MCF 10A (cell line): ENCODE measurements at regions of chr19 and their contacts with region 1.

Region 1: GRCh38 chr19:9934132-9934950 is 2.0 kb downstream of the OLFM2 start:
- DNase-seq: peak; percentile 83
- H3K4me3 Mint-ChIP-seq: no peak overlapping the region
- H3K27ac Mint-ChIP-seq: no peak overlapping the region
- H3K4me1 Mint-ChIP-seq: peaks cover 12% of the 10 kb centered on the region
- H3K27me3 Mint-ChIP-seq: peaks cover 60% of the 10 kb centered on the region
- CTCF ChIP-seq: peak; percentile 97

Region 2: GRCh38 chr19:9945319-9945966 is 11.1 kb after region 1 on chr19:
- CTCF ChIA-PET with region 1: interaction called, 19 read pairs
- POLR2A ChIA-PET with region 1: no interaction called
- intact Hi-C with region 1: no loop called
- DNase-seq: peak; percentile 79
- H3K4me3 Mint-ChIP-seq: no peak overlapping the region
- H3K27ac Mint-ChIP-seq: peak overlapping the region; percentile 6
- H3K4me1 Mint-ChIP-seq: peaks cover 10% of the 10 kb centered on the region
- H3K27me3 Mint-ChIP-seq: peaks cover 18% of the 10 kb centered on the region
- CTCF ChIP-seq: no peak

Region 3: DNA sequence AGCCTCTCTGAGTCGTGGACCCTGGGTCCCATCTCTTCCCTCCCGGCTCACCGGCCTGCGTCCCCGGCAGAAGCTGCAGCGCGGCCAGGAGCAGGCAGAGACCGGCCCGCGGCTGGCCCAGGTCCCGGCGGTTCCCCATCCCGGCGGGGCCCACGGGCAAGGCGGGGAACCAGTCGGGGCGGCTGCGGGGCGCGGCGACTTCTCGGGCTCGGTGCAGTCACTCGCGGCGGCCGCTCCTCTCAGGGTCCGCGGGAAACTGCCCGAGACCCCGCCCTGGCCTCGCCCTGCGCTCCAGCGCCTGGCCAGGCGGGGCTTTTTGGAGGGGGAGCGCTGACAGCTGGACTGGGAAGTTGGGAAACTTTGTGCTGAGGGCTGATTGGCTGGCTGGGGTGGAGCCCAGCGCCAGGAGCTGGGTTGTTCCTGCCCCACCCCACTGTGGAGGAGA is 75.9 kb after region 1 on chr19 and contains the start of gene COL5A3:
- CTCF ChIA-PET with region 1: interaction called, 14 read pairs
- POLR2A ChIA-PET with region 1: no interaction called
- intact Hi-C with region 1: no loop called
- DNase-seq: peak; percentile 49
- H3K4me3 Mint-ChIP-seq: peak within 1 kb of the TSS; percentile 54
- H3K27ac Mint-ChIP-seq: no peak within 1 kb of the TSS
- H3K4me1 Mint-ChIP-seq: peaks cover 20% of the 10 kb centered on the region
- H3K27me3 Mint-ChIP-seq: peaks cover 78% of the 10 kb centered on the region
- CTCF ChIP-seq: no peak
- total RNA-seq, gene COL5A3: 0.98 and 1.5 TPM in 2 replicates

Region 4: GRCh38 chr19:10112895-10113591 is 178.7 kb after region 1 on chr19:
- CTCF ChIA-PET with region 1: interaction called, 5 read pairs
- POLR2A ChIA-PET with region 1: no interaction called
- intact Hi-C with region 1: loop called (anchors 5 kb)
- DNase-seq: peak; percentile 68
- H3K4me3 Mint-ChIP-seq: no peak overlapping the region
- H3K27ac Mint-ChIP-seq: no peak overlapping the region
- H3K4me1 Mint-ChIP-seq: peaks cover 10% of the 10 kb centered on the region
- H3K27me3 Mint-ChIP-seq: no peaks in the 10 kb centered on the region
- CTCF ChIP-seq: peak; percentile 68

Region 5: DNA sequence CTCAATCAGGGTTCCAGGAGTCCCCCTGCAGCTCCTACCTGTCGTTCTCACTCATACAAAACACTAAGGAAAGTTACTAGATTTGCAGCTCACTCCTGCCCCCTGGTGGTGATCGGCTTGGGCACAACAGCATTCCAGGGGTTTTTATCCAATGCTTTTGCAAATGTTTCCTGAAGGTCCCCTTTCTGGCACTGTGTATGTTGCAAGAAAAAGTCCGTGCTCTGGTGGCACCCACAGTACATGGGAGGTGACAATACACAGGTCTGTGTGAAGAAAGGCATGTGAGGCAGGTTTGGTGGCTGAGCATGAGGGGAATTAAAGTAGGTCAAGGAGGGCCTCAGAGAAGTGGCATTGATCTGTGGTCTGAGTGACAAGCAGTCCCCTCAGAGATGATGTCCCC is 454.6 kb after region 1 on chr19:
- CTCF ChIA-PET with region 1: interaction called, 5 read pairs
- POLR2A ChIA-PET with region 1: no interaction called
- intact Hi-C with region 1: loop called (anchors 1 kb)
- DNase-seq: peak; percentile 89
- H3K4me3 Mint-ChIP-seq: no peak overlapping the region
- H3K27ac Mint-ChIP-seq: no peak overlapping the region
- H3K4me1 Mint-ChIP-seq: peaks cover 5% of the 10 kb centered on the region
- H3K27me3 Mint-ChIP-seq: no peaks in the 10 kb centered on the region
- CTCF ChIP-seq: peak; percentile 89